HEK293 (cell line): ENCODE measurements at regions of chr22 and their contacts with region 1.

Region 1: DNA sequence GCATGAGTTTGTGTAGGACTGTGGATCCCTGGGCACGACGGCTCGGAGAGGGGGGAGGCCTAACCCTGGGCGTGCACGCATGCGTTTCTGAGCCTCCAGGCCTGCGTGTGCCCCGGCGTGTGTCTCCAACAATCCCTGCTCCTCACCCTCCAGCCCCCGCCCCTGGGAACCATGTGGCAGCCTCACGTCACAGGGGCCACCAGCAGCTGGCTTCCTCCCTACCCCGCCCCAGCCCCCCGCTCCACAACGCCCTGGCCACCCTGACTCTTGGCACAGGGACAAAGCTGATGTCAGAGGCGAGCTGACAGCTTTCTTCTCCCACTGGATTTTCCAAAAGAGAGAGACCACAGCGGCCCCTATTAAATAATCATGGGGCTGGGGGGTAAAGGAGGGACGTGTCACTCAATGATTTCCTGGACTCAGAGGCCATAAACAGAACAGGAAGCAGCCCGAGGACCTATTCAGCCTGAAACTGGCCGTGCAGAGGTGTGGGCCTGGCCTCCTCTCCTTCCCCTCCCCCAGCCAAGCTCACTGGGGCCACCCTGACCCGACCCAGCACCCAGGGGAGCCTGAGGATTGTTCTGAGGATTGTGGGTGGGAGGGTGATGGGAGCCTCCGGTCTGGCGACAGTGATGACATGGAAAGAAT is 6.8 kb upstream of the LIF start:
- H3K4me3 ChIP-seq: no peak overlapping the region
- H3K27ac ChIP-seq: no peak overlapping the region; the same call in 1 of the 2 replicates
- H3K4me1 ChIP-seq: no peaks in the 10 kb centered on the region; the same call in 1 of the 2 replicates
- CTCF ChIP-seq: no peak

Region 2: DNA sequence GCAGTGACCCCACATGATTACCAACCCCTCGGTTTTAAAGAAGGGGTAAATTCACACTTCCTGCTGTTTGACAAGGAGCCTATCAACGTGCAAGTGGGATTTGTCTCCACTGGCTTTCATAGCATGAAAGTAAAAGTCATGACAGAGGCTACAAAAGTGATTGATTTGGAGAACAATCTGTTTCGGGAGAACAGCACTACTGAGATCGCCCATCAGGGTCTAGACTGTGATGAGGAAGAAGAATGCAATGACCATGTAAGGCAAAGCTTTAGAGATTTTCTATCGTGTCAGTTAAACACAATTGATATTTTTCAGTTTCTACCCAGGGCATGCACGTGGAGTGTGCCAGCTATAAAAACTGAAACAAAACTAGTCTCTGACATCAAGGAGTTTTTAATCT is 131.4 kb before region 1 on chr22:
- CTCF ChIA-PET with region 1: interaction called, 26 read pairs
- POLR2A ChIA-PET with region 1: no interaction called
- H3K4me3 ChIP-seq: no peak overlapping the region
- H3K27ac ChIP-seq: no peak overlapping the region
- H3K4me1 ChIP-seq: no peaks in the 10 kb centered on the region
- CTCF ChIP-seq: no peak

Region 3: DNA sequence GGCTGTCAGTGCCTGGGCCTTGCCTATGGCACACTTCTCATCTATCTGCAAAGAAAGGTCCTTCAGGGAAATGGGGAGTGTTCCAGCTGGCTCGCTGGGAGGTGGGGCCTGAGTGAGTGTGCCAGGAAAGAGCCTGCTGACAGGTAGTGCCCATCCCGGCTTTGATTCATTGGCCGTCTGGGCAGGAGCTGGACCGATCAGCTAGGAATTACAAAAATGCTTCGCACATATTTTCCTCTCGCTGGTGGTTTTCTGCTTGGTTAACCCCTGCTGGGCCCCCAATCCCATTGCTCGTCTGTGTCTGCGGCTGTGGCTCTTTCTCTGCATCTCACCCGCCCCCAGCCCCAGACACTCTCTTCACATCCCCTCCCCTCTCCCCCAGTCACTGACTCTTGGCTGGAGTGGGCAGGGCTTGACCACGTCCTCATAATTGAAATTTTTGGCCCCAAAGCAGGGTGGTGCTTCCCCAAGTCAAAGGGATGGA is 17.6 kb before region 1 on chr22:
- CTCF ChIA-PET with region 1: interaction called, 19 read pairs
- POLR2A ChIA-PET with region 1: interaction called, 5 read pairs
- H3K4me3 ChIP-seq: no peak overlapping the region
- H3K27ac ChIP-seq: no peak overlapping the region
- H3K4me1 ChIP-seq: no peaks in the 10 kb centered on the region
- CTCF ChIP-seq: no peak

Region 4: GRCh38 chr22:30531651-30532608 is 278.6 kb after region 1 on chr22:
- CTCF ChIA-PET with region 1: no interaction called
- POLR2A ChIA-PET with region 1: no interaction called
- H3K4me3 ChIP-seq: no peak overlapping the region
- H3K27ac ChIP-seq: no peak overlapping the region
- H3K4me1 ChIP-seq: no peaks in the 10 kb centered on the region
- CTCF ChIP-seq: no peak

Region 5: DNA sequence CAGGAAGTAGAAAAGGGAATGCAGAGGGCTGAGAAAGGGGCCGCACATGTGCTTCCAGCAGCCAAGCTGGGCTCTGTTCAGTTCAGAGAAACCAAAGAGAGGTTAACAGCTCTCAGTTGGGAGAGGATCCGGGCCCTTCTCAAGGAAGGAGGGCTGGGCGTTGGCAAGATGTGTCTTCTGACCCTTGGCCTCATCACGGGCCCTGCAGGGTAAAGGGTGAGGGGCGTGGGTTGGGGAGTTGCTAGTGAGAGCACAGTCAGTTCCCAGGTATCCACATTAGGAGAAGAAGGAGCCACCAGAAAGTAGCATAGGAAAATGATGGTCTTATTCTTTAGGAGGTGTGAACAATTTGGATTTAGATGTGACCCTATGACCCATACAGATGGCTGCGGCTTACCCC is 514.3 kb after region 1 on chr22:
- CTCF ChIA-PET with region 1: no interaction called
- POLR2A ChIA-PET with region 1: no interaction called
- H3K4me3 ChIP-seq: no peak overlapping the region
- H3K27ac ChIP-seq: no peak overlapping the region
- H3K4me1 ChIP-seq: no peaks in the 10 kb centered on the region
- CTCF ChIP-seq: no peak